Right cardiac atrium (tissue), 5 donors: ENCODE measurements at regions of chr6 and their contacts with region 1.

Region 1: DNA sequence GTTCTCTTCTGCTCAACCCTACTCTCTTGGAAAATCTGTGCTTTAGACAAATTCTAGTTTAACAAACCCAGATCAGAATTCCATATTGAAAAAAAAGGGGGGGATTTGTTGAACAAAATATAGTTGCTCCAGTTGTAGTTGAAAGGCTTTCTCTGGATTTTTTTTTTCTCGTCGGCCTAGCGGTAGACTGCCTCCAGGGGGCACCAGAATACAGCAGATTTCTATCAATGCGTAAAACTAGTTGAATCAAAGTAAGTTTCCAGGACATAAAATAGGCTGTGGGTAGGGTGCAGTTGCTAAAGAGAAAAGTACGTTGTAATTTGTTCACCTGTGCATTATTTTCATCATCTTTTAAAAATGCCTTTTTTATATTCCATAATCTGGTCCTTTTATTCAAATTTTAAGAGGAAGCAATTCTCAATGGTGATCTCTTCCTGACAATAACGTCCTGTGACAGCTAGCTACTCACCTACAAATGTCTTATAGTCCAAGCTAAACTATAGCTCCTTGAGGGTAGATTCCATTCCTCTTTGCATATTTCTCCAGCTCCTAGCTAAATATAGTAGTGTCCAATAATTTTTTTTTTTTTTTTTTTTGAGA is 105.4 kb downstream of the PERP start:
- DNase-seq: peak in 2 of 3 donors; percentile 32 to 58
- ATAC-seq: no peak
- H3K4me3 ChIP-seq: no peak overlapping the region
- H3K27ac ChIP-seq: no peak overlapping the region
- H3K4me1 ChIP-seq: no peaks in the 10 kb centered on the region
- H3K27me3 ChIP-seq: no peaks in the 10 kb centered on the region

Region 2: DNA sequence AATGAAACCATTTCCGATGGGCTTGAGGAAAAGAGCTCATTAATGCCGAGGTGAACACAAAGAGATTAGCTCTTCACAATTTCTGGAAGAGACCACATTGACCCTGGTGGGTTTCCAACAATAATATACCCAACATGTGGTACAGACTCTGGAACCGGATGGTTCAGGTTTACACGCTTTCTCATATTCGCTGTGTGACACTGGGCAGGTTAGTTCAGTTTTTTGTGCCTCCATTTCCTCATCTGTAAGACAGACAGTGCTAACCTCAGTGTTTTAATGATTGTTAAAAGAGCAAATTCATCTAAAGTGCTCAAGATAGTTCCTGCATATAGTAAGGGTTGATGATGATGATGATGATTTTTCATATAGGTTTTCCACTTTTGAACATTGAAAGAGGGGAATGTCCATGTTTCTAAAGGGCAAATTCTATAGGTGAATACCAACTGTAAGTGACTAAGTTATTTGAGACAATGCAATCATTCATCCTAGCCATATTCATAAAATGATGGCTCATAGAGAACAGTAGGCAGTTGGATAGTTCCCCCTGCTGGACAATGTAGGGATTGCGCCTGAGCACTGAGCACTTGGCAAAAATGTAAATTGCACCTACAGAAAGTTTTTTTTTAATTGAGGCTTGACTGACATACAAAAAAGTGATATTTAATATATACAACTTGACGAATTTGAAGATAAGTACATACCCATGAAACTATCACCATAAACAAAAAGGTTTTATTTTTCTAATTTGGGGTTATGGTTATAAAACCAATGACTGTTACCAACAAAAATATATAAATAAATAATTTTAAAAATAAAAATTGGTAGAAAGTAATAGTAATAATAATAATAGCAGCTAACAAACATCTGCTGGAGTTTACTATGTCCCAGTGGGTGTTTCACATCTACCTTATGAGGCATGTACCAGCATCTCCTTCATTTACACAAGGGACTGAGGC is 107.5 kb after region 1 on chr6:
- intact Hi-C with region 1: loop called (anchors 2 to 5 kb)
- DNase-seq: peak; percentile 49 to 82 (median 64)
- ATAC-seq: no peak
- H3K4me3 ChIP-seq: no peak overlapping the region
- H3K27ac ChIP-seq: no peak overlapping the region
- H3K4me1 ChIP-seq: no peaks in the 10 kb centered on the region
- H3K27me3 ChIP-seq: no peaks in the 10 kb centered on the region